ENCODE measurements at regions of chr1 and their contacts with region 1.

Region 1: DNA sequence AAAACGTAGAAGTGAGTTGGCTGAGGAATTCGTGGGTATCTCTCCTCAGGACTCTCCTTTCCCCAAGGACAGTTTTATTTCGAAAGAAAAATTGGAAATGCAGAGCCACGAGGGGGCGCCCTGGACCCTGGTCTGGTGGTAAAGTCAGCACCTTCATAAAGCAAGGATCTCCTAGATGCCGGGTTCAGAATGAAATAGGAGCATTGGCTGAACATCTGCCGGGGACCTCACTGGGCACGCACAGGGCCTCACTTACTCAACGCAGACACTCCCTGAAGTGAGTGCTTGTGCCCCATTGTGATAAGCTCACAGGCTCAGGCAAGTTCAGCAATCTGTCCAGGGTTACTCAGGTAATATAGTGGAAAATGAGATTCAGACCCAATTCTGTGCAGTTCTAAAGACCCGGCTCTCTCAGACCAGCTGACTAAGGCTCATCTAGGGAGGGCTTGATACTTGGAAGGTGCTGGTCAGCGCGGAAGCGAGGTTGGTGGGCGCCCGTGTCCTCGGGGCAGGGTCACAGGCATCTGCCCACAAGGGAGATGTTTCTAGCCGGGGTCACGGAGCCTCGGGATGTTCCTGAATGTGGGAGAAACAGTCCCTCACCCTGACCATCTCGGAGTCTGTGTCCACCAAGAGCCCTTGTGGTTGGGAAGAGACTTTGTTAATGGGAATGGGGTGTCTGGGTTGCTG is 55.7 kb upstream of the ETV3 start:
- DNase-seq: peak; percentile 74
- H3K4me3 Mint-ChIP-seq: no peak overlapping the region
- H3K27ac Mint-ChIP-seq: no peak overlapping the region
- H3K4me1 Mint-ChIP-seq: peaks cover 3% of the 10 kb centered on the region
- H3K27me3 Mint-ChIP-seq: peaks cover 27% of the 10 kb centered on the region

Region 2: GRCh38 chr1:157163273-157164127 is 30.3 kb before region 1 on chr1:
- CTCF ChIA-PET with region 1: no interaction called
- POLR2A ChIA-PET with region 1: no interaction called
- intact Hi-C with region 1: no loop called
- DNase-seq: peak; percentile 83
- H3K4me3 Mint-ChIP-seq: no peak overlapping the region
- H3K27ac Mint-ChIP-seq: no peak overlapping the region
- H3K4me1 Mint-ChIP-seq: no peaks in the 10 kb centered on the region
- H3K27me3 Mint-ChIP-seq: peaks cover 10% of the 10 kb centered on the region

Region 3: DNA sequence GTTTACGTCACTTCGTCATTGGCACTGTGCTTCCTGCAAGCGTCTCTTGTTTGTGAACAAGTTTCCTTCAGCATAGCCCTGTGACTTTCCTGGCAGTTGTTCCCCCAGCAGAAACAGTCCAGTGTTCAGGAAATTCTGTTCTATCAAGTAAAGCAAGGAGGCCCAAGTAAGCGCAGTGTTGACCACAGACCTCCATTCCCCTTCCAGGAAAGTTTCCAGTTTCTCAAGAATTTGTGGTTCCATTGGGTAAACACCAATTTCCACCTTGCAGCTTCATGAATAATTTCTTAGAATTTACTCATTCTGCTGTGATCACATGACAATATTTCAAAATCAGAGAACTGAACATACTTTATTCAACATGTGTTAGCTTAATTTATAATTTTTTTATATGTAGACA is 32.9 kb after region 1 on chr1:
- CTCF ChIA-PET with region 1: no interaction called
- POLR2A ChIA-PET with region 1: no interaction called
- intact Hi-C with region 1: no loop called
- DNase-seq: no peak
- H3K4me3 Mint-ChIP-seq: no peak overlapping the region
- H3K27ac Mint-ChIP-seq: no peak overlapping the region
- H3K4me1 Mint-ChIP-seq: no peaks in the 10 kb centered on the region
- H3K27me3 Mint-ChIP-seq: peaks cover 28% of the 10 kb centered on the region

Region 4: DNA sequence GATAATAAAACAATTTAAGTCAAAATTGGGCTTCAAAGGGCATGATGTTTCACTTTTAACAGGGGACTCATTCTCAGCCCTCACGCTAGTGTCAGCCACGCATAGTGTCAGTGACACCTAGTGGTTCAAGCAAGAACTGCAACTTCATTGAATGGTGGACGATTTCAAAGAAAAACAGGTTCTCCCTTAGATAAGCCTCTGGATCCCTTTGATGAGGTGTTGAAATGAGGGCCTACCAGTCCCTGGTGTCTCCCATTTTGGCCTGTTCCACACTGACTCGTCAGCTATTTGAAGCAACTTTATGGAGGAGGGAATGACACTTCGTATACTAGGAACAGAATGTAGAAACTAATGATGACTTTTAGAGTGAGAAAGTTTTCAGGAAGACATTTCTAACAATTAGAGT is 302.3 kb after region 1 on chr1:
- CTCF ChIA-PET with region 1: interaction called, 15 read pairs
- POLR2A ChIA-PET with region 1: no interaction called
- intact Hi-C with region 1: no loop called
- DNase-seq: peak; percentile 27
- H3K4me3 Mint-ChIP-seq: no peak overlapping the region
- H3K27ac Mint-ChIP-seq: no peak overlapping the region
- H3K4me1 Mint-ChIP-seq: no peaks in the 10 kb centered on the region
- H3K27me3 Mint-ChIP-seq: peaks cover 25% of the 10 kb centered on the region

Measured in activated CD4-positive, alpha-beta memory T cell treated with anti-CD3 and anti-CD28 coated beads for 36 hours (primary cell).